ENCODE measurements at regions of chr16 and their contacts with region 1.

Region 1: GRCh38 chr16:9647981-9648712 is 534.1 kb downstream of the GRIN2A start:
- DNase-seq: peak in 1 of 2 donors; percentile 13
- ATAC-seq: peak in 5 of 8 donors; percentile 35 to 94 (median 48)
- H3K4me3 ChIP-seq: no peak overlapping the region
- H3K27ac ChIP-seq: no peak overlapping the region
- H3K4me1 ChIP-seq: no peaks in the 10 kb centered on the region
- H3K27me3 ChIP-seq: peaks cover 0 to 9% (median 0%) of the 10 kb centered on the region in 7 donors
- CTCF ChIP-seq: peak; percentile 60 to 80 (median 68)

Region 2: DNA sequence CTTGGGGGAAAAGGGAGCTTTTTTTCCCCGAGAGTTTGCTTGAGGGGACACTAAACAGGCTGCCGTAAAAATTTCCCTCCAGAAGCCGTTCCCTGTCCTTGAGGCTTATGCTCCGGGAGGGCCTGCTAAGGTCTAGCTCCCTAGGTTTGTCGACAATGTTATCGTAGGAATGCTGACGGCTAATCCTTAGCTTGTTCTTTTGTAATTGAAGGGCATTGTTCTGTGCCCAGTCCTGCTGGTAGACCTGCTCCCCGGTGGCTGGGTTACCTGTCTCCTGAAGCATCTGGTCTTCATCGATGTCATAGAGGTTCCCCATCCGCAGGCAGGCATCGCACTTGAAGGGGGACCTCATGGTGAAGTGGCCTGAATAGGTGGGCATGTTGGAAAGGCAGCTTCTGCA is 115.4 kb after region 1 on chr16:
- intact Hi-C with region 1: no loop called
- DNase-seq: no peak
- ATAC-seq: no peak
- H3K4me3 ChIP-seq: no peak overlapping the region
- H3K27ac ChIP-seq: no peak overlapping the region
- H3K4me1 ChIP-seq: peaks cover 0 to 7% (median 0%) of the 10 kb centered on the region in 9 donors
- H3K27me3 ChIP-seq: no peaks in the 10 kb centered on the region
- CTCF ChIP-seq: no peak

Region 3: DNA sequence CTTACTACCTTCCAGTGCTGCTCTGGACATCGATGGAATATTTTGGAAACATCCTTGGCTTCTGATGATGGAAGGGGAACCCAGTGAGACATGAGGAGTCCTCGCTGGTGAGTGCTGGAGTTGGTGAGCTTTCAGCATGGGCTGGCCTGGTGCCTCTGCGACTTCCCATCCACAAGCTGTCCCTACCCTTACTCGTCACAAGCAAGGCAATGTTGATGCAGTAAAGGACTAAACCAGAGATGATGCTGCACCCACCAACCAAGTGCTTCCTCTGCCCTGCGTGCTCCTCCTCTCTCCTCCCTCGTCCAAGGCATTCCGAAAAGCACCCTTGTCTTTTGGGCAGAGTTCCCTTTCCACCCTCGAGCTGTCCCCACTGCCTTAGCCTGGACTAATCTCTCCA is 379.4 kb after region 1 on chr16:
- intact Hi-C with region 1: loop called in 2 of 10 experiments (anchors 10 kb)
- DNase-seq: no peak
- ATAC-seq: no peak
- H3K4me3 ChIP-seq: no peak overlapping the region
- H3K27ac ChIP-seq: no peak overlapping the region
- H3K4me1 ChIP-seq: no peaks in the 10 kb centered on the region
- H3K27me3 ChIP-seq: peaks cover 0 to 25% (median 0%) of the 10 kb centered on the region in 7 donors
- CTCF ChIP-seq: no peak

Region 4: DNA sequence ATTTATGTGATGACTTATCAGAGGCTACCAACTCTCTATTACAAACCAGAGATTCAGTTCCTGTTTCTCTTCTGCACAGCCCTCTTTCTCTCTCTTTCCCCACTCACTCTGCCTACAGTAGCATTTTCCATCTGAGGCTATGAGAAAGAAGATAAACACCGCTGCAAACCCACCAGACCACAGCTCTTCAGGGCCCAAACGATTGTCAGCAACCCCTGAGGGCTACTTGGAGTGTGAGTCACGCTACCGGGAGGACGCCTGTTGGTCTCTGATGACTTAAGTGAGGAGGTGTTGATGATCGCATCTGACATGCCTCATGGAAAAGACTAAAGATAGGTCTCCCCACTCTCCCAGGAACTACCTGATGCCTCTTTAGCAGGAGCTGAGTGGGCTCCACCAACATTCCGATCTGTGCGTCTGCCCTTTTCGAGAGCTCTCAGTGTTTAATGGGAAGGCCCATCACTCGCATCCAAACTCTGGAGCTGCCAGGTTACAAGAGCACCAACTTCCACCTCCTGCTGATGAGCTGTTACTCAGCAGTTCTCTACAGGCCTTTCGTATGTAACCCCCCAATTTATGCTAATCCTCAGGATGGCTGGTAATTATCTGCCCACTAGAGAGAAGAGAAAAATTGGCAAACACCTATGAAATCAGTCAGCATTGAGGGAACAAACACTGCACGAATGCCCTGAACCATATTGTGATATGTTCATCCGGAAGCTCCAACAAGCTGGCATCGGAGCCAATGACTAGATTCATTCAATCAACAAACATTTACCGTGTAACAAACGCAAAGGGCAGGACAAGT is 524.9 kb after region 1 on chr16:
- intact Hi-C with region 1: loop called in 1 of 10 experiments (anchors 10 kb)
- DNase-seq: no peak
- ATAC-seq: no peak
- H3K4me3 ChIP-seq: no peak overlapping the region
- H3K27ac ChIP-seq: no peak overlapping the region
- H3K4me1 ChIP-seq: no peaks in the 10 kb centered on the region
- H3K27me3 ChIP-seq: peaks cover 0 to 29% (median 8%) of the 10 kb centered on the region in 7 donors
- CTCF ChIP-seq: no peak

Measured in heart right ventricle (tissue), 16 donors.